A549 (cell line): ENCODE measurements at regions of chr13 and their contacts with region 1.

Region 1: GRCh38 chr13:52665325-52665724 is 12.7 kb downstream of the SUGT1 start:
- DNase-seq: peak; percentile 7 to 10
- ATAC-seq: no peak
- H3K4me3 ChIP-seq: no peak overlapping the region
- H3K27ac ChIP-seq: no peak overlapping the region
- H3K4me1 ChIP-seq: no peaks in the 10 kb centered on the region
- CTCF ChIP-seq: peak; percentile 39; the same call in 2 of the 3 replicates
- EP300 ChIP-seq: no peak
- POLR2A ChIP-seq: no peak
- RAD21 ChIP-seq: peak; percentile 14 to 17; a peak in 1 of 5 replicates

Region 2: GRCh38 chr13:52652196-52652979 is 12.9 kb before region 1 on chr13 and contains the start of gene SUGT1:
- CTCF ChIA-PET with region 1: interaction called, 10 read pairs
- POLR2A ChIA-PET with region 1: interaction called, 4 read pairs
- DNase-seq: peak; percentile 60 to 96
- ATAC-seq: peak; percentile 97 to 98
- H3K4me3 ChIP-seq: peak within 1 kb of the TSS; percentile 58
- H3K27ac ChIP-seq: peak within 1 kb of the TSS; percentile 87 to 94
- H3K4me1 ChIP-seq: peaks cover 7% of the 10 kb centered on the region; the same call in 1 of the 3 replicates
- CTCF ChIP-seq: peak; percentile 40
- EP300 ChIP-seq: no peak
- POLR2A ChIP-seq: peak; percentile 75
- RAD21 ChIP-seq: no peak
- polyA plus RNA-seq, gene SUGT1: 37.7 and 56.4 TPM in 2 replicates

Region 3: DNA sequence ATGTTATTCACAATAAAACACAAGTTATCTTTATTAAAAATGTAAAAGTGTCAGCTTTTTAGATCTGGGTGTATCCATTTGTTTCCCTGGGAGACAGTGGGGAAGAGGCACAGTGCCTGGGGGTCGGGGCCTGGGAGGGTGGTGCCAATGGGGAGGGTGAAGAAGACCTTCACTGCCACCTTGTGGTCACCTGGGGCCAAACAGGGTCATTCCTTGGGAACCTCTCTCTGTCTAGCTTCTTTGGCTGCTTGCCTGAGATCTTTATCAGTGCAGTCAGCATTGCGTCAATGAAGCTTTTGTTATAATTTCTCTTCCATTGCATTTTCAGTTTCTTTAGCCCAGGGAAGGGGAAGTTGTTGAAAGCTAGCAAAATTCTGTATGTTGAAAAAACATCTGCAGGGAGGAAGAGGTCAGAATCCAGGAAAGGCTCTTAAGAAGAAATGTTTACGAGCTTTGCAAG is 144.0 kb after region 1 on chr13:
- CTCF ChIA-PET with region 1: interaction called, 20 read pairs
- POLR2A ChIA-PET with region 1: no interaction called
- DNase-seq: peak; percentile 68 to 73
- ATAC-seq: peak; percentile 83 to 92
- H3K4me3 ChIP-seq: no peak overlapping the region
- H3K27ac ChIP-seq: no peak overlapping the region
- H3K4me1 ChIP-seq: no peaks in the 10 kb centered on the region
- CTCF ChIP-seq: peak; percentile 55
- EP300 ChIP-seq: no peak
- POLR2A ChIP-seq: no peak
- RAD21 ChIP-seq: peak; percentile 68 to 72

Region 4: DNA sequence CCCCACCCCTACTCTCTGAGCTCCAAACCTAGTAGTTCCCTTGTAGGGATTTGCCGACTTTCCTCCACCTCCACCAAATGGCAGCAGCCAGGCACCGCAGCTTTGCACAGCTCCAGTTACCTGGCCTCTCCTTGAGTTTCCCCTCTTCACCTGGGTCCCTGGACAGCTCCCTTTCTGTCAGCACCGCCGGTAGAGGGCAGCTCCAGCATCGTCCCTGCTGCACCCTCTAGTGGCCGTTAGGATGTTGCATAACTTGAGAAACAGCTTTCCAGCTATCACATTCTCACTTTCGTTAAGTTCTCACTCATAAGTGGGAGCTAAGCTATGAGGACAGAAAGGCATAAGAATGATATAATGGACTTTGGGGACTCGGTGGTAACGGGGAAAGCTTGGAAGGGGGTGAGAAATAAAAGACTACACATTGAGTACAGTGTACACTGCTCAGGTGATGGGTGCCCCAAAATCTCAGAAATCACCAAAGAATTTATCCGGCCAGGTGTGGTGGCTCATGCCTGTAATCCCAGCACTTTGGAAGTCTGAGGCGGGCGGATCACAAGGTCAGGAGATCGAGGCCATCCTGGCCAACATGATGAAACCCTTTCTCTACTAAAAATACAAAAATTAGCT is 302.9 kb after region 1 on chr13:
- CTCF ChIA-PET with region 1: interaction called, 18 read pairs
- POLR2A ChIA-PET with region 1: no interaction called
- DNase-seq: peak; percentile 44 to 66
- ATAC-seq: peak; percentile 97 to 98
- H3K4me3 ChIP-seq: no peak overlapping the region
- H3K27ac ChIP-seq: no peak overlapping the region
- H3K4me1 ChIP-seq: no peaks in the 10 kb centered on the region
- CTCF ChIP-seq: peak; percentile 89
- EP300 ChIP-seq: no peak
- POLR2A ChIP-seq: no peak
- RAD21 ChIP-seq: peak; percentile 62 to 66

Region 5: GRCh38 chr13:53090461-53090860 is 425.1 kb after region 1 on chr13:
- CTCF ChIA-PET with region 1: no interaction called
- POLR2A ChIA-PET with region 1: no interaction called
- DNase-seq: no peak
- ATAC-seq: no peak
- H3K4me3 ChIP-seq: no peak overlapping the region
- H3K27ac ChIP-seq: no peak overlapping the region
- H3K4me1 ChIP-seq: no peaks in the 10 kb centered on the region
- CTCF ChIP-seq: no peak
- EP300 ChIP-seq: no peak
- POLR2A ChIP-seq: no peak
- RAD21 ChIP-seq: no peak